Activated naive CD4-positive, alpha-beta T cell treated with anti-CD3 and anti-CD28 coated beads for 36 hours (primary cell): ENCODE measurements at regions of chr9 and their contacts with region 1.

Region 1: DNA sequence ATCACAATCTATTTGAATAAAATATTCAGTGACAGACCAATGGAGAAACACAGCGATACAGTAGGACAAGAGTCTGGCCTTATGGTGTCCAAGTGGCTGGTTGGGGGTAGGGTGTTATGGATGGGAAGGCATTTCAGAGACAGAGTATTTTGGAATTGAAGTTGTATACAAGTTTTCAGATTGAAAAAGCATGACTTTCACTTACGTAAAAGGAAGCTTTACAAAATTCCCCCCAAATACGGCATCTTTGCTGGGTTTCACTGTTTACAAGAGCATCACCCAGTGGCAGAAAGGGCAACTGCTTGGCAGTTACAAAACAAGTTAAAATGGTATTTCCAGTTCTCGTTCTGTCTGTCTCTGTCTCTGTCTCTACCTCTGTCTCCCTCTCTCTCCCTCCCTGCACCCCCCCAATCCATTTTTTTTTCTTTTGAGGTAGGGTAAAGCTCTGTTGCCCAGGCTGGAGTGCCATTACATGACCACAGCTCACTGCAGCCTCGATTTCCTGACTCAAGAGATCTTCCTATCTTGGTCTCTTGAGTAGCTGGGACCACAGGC is 86.2 kb downstream of the PTPN3 start:
- DNase-seq: peak; percentile 72
- H3K4me3 Mint-ChIP-seq: no peak overlapping the region
- H3K27ac Mint-ChIP-seq: peak overlapping the region; percentile 69
- H3K4me1 Mint-ChIP-seq: peaks cover 31% of the 10 kb centered on the region
- H3K27me3 Mint-ChIP-seq: peaks cover 22% of the 10 kb centered on the region

Region 2: GRCh38 chr9:108885643-108886348 is 526.1 kb before region 1 on chr9:
- CTCF ChIA-PET with region 1: no interaction called
- intact Hi-C with region 1: loop called (anchors 1 kb)
- DNase-seq: peak; percentile 86
- H3K4me3 Mint-ChIP-seq: peak overlapping the region; percentile 2
- H3K27ac Mint-ChIP-seq: peak overlapping the region; percentile 77
- H3K4me1 Mint-ChIP-seq: peaks cover 19% of the 10 kb centered on the region
- H3K27me3 Mint-ChIP-seq: no peaks in the 10 kb centered on the region

Region 3: GRCh38 chr9:109012876-109013678 is 398.8 kb before region 1 on chr9 and contains the start of gene CTNNAL1:
- CTCF ChIA-PET with region 1: no interaction called
- intact Hi-C with region 1: loop called (anchors 2 kb)
- DNase-seq: peak; percentile 86
- H3K4me3 Mint-ChIP-seq: peak within 1 kb of the TSS; percentile 95
- H3K27ac Mint-ChIP-seq: peak within 1 kb of the TSS; percentile 68
- H3K4me1 Mint-ChIP-seq: peaks cover 28% of the 10 kb centered on the region
- H3K27me3 Mint-ChIP-seq: no peaks in the 10 kb centered on the region
- total RNA-seq, gene CTNNAL1: 18.4 to 19.0 TPM

Region 4: DNA sequence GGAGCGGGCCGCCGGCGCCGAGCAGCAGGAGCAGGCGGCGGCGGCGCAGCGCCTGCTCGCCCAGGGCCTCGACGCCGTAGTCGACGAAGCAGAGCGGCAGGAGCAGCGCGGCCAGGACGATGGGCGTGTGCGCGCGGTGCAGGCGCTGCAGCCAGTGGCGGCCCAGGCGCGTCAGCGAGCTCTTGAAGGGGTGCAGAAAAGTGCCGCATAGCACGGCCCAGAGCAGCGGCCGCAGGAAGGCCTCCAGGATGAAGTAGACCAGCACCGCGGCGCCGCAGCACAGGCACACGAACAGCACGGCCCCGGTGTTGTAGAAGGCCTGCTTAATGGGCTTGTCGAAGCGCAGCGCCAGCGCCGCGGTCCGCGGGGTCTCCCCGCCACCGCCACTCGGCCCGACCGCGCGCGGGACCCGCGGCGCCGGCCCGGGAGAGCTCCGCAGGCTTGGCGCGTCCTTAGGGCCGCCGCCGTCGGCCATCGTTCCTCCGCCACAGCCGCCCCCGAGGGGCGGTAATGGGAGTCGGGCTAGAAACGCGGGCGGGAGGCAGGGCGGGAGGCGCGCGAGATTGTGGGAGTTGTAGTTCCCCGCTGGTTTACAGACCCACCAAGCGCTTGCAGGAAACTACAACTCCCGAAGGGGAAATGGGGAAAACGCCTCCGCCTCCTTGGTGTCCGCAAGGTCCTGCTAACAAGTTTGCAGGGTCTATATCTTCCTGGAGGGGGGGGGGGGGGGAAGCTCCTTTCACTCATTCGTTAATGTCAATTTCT is 292.3 kb before region 1 on chr9 and contains the start of gene TMEM245:
- CTCF ChIA-PET with region 1: no interaction called
- intact Hi-C with region 1: loop called (anchors 2 kb)
- DNase-seq: peak; percentile 97
- H3K4me3 Mint-ChIP-seq: peak within 1 kb of the TSS; percentile 90
- H3K27ac Mint-ChIP-seq: peak within 1 kb of the TSS; percentile 78
- H3K4me1 Mint-ChIP-seq: peaks cover 40% of the 10 kb centered on the region
- H3K27me3 Mint-ChIP-seq: no peaks in the 10 kb centered on the region
- total RNA-seq, gene TMEM245: 19.9 TPM

Region 5: DNA sequence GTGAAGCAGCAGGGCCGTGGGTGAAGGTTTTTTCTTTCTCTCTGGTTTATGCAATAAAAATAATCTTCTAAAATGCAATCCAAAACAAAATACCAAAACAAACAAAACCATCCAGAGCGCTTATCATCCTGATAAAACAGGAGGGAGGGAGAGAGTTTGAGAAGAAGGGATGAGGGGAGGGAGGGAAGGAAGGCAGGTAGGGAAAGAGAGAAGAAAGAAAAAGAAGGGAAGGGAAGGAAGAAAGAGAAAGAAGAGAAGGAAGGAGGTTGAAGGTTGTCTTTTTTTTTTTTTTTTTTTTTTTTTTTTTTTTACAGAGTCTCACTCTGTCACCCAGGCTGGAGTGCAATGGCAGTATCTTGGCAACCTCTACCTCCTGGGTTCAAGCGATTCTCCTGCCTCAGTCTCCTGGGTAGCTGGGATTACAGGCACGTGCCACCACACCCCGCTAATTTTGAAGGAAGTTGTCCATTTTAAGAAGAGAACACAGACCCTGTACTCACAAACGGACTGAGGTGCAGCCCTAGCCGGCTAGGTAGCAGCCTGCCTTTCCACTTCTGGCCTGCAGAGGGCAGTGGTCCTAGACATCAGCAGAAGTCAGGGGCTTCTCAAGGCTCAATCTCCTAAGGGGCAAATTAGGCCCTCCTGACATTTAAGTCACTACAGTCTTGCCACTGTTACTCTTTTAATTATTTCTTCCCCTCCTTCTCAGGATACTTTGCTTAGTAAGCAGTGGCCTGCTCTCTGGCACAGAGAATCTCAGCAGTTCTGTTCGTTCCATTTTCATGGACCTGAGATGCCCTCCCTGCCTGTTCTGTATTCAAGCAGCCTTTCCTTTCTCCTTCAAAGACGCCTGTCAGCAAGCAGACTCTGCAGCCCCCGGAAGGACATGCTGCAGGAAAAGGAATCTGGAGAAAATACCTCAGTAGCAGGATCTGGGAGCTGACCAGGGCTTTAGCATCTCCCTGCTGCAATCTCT is 167.4 kb before region 1 on chr9:
- CTCF ChIA-PET with region 1: no interaction called
- intact Hi-C with region 1: loop called (anchors 1 kb)
- DNase-seq: peak; percentile 80
- H3K4me3 Mint-ChIP-seq: no peak overlapping the region
- H3K27ac Mint-ChIP-seq: peak overlapping the region; percentile 42
- H3K4me1 Mint-ChIP-seq: no peaks in the 10 kb centered on the region
- H3K27me3 Mint-ChIP-seq: peaks cover 17% of the 10 kb centered on the region

Region 6: DNA sequence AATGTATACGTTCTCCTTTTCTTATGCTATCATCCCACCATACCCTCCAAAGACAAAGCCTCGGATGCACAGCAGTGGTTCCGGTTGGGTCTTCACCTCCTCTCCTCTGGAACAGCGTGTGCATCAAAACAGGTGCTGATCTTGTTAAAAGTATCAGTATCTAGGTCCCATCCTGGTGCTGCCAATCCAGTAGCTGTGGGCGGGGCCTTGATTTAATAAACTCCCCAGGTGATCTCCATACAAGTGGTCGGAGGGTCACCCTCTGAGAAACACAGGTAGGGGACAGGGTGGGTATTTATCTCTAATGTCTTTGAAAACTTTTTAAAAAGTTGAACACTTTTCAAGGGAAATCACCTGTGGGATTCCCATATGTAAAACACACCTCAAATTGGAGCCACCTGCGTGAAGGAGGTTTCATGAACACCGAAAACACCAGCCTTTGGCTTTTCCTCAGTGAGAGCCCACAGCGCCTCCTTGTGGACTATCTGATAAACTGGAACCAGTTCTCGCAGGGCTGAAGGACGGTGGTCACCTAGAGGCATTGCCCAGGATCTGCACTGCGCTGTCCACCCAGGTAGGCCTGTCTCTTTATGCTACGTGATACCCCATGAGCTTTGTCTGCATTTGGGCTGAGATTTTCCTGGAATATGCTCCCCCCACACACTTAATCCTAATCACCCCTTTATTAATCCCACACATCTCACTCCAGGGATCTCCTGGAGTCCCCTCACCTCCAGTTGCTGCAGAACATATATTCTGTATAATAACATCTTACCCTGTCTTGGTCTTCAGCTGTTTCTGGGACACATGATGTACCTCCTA is 10.5 kb before region 1 on chr9:
- CTCF ChIA-PET with region 1: interaction called, 6 read pairs
- intact Hi-C with region 1: loop called (anchors 1 kb)
- DNase-seq: peak; percentile 75
- H3K4me3 Mint-ChIP-seq: no peak overlapping the region
- H3K27ac Mint-ChIP-seq: no peak overlapping the region
- H3K4me1 Mint-ChIP-seq: peaks cover 8% of the 10 kb centered on the region
- H3K27me3 Mint-ChIP-seq: peaks cover 20% of the 10 kb centered on the region

Region 7: DNA sequence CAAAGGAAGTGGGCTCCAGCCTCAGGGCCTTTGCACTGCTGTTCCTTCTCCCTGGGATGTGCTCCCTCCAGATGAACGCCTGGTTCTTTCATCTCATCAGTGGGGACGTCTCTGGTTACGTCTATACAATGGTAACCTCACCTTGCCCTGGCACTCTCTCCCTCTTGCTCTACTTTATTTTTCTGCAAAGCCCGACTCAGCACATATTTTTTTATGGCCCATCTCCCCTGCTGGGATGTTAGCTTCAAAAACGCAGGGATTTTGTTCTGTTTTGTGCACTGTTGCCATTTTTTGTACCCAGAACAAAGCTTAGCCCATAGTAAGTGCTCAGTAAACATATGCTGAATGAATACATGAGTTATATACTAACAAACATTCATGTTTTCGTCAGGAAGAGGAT is 48.7 kb after region 1 on chr9:
- CTCF ChIA-PET with region 1: no interaction called
- intact Hi-C with region 1: no loop called
- DNase-seq: no peak
- H3K4me3 Mint-ChIP-seq: no peak overlapping the region
- H3K27ac Mint-ChIP-seq: no peak overlapping the region
- H3K4me1 Mint-ChIP-seq: no peaks in the 10 kb centered on the region
- H3K27me3 Mint-ChIP-seq: peaks cover 21% of the 10 kb centered on the region

Region 8: GRCh38 chr9:109880277-109881169 is 468.6 kb after region 1 on chr9:
- CTCF ChIA-PET with region 1: no interaction called
- intact Hi-C with region 1: loop called (anchors 10 kb)
- DNase-seq: peak; percentile 62
- H3K4me3 Mint-ChIP-seq: peak overlapping the region; percentile 43
- H3K27ac Mint-ChIP-seq: no peak overlapping the region
- H3K4me1 Mint-ChIP-seq: peaks cover 18% of the 10 kb centered on the region
- H3K27me3 Mint-ChIP-seq: peaks cover 5% of the 10 kb centered on the region